BJ (cell line): ENCODE measurements at regions of chr1 and their contacts with region 1.

Region 1: GRCh38 chr1:48488721-48489120 is 16.7 kb upstream of the SPATA6 start:
- DNase-seq: no peak
- H3K4me3 ChIP-seq: no peak overlapping the region
- H3K27me3 ChIP-seq: no peaks in the 10 kb centered on the region
- CTCF ChIP-seq: no peak

Region 2: GRCh38 chr1:48471691-48472576 is 16.8 kb before region 1 on chr1 and contains the start of gene SPATA6:
- CTCF ChIA-PET with region 1: interaction called, 11 read pairs
- POLR2A ChIA-PET with region 1: no interaction called
- DNase-seq: peak; percentile 47
- H3K4me3 ChIP-seq: peak within 1 kb of the TSS; percentile 62
- H3K27me3 ChIP-seq: no peaks in the 10 kb centered on the region
- CTCF ChIP-seq: no peak
- polyA plus RNA-seq, gene SPATA6: 1.6 and 2.6 TPM in 2 replicates

Region 3: DNA sequence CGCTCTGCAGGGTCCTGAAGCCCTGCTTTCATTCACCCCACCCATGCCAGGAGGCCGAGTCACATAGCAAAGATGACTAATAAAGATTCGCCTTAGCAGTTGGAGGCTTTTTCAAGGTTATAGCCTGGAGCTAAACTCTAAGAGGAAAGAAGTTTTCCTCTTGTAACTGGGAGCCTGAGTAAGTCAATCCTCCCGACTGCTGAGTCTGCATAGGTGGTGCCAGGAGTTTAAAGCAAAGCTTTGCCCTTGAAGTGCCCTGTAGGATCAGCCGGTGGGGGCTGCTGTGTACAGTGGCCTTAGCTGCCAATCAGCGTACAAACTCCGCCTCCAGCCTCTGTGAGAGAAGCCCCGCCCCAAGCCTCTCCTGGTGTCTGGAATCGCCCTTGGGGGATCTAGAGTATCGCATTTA is 130.8 kb after region 1 on chr1:
- CTCF ChIA-PET with region 1: no interaction called
- POLR2A ChIA-PET with region 1: no interaction called
- DNase-seq: peak; percentile 5
- H3K4me3 ChIP-seq: no peak overlapping the region
- H3K27me3 ChIP-seq: no peaks in the 10 kb centered on the region
- CTCF ChIP-seq: no peak